Endothelial cell of umbilical vein (primary cell): ENCODE measurements at regions of chr17 and their contacts with region 1.

Region 1: DNA sequence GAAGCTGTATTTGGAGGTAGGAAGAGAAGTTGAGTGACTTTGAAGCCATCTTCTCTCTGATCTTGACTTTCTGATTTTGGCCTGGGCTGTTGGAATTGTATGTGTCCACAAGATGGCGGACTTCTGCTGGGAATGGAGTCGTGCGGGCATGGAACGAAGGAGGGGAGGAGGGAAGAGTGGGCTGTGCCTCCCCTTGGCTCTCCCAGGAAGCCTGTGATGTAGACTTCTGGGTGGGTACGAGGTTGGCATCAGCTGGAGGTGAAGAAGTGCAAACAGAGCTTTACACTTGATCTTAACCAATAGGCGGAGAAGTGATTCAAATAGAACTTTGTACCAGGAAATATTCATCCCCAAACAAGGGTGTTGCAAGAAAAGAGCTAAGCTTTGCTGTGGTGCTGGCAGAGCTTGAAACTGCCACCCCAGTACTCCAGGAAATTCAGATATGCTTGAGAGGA is 7.4 kb upstream of the TMEM220 start:
- DNase-seq: peak; percentile 45
- H3K4me3 ChIP-seq: no peak overlapping the region
- H3K27ac ChIP-seq: no peak overlapping the region
- H3K4me1 ChIP-seq: no peaks in the 10 kb centered on the region
- H3K27me3 ChIP-seq: peaks cover 0 to 3% of the 10 kb centered on the region in 2 experiments
- CTCF ChIP-seq: peak; percentile 69 to 77
- POLR2A ChIP-seq: no peak

Region 2: DNA sequence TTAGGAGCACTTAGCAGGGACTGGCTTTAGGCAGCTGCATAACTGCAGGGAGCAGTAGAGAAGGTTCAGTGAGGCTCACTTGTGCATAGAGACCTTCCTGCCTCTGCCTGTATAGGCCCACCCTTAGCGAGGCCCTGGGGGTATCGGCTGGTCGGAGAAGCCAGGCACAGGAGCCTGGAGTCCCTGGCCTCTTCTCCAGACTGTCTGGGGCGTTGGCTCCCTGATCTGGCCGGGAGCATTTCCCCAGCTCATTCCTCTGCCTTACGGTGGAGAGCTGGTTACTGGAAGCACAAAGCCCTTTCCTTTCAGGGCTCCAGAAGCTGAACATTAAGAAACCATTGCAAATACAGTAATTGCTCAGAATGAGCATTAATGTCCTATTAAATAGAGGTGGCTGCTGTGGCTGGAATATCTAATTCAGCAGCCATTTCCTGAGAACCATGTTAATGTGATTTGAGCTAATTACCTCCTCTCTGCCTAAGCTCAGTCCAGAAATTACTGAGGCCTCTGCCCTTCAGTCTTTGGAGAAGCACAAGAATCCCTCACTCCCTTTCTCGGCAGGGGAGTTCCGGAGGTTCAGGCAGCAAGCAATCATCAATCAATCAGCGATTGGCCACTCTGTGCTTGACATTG is 11.5 kb after region 1 on chr17:
- CTCF ChIA-PET with region 1: interaction called, 19 read pairs
- POLR2A ChIA-PET with region 1: no interaction called
- dilution Hi-C with region 1: no loop called
- intact Hi-C with region 1: no loop called
- DNase-seq: no peak
- H3K4me3 ChIP-seq: no peak overlapping the region
- H3K27ac ChIP-seq: no peak overlapping the region
- H3K4me1 ChIP-seq: no peaks in the 10 kb centered on the region
- H3K27me3 ChIP-seq: no peaks in the 10 kb centered on the region
- CTCF ChIP-seq: no peak
- POLR2A ChIP-seq: no peak

Region 3: GRCh38 chr17:10844621-10845387 is 107.6 kb after region 1 on chr17:
- CTCF ChIA-PET with region 1: interaction called, 36 read pairs
- POLR2A ChIA-PET with region 1: no interaction called
- dilution Hi-C with region 1: no loop called
- intact Hi-C with region 1: loop called (anchors 1 kb)
- DNase-seq: peak; percentile 56
- H3K4me3 ChIP-seq: peak overlapping the region in 1 of 3 experiments; percentile 33
- H3K27ac ChIP-seq: no peak overlapping the region
- H3K4me1 ChIP-seq: no peaks in the 10 kb centered on the region
- H3K27me3 ChIP-seq: peaks cover 0 to 4% of the 10 kb centered on the region in 2 experiments
- CTCF ChIP-seq: peak; percentile 73 to 88
- POLR2A ChIP-seq: no peak

Region 4: DNA sequence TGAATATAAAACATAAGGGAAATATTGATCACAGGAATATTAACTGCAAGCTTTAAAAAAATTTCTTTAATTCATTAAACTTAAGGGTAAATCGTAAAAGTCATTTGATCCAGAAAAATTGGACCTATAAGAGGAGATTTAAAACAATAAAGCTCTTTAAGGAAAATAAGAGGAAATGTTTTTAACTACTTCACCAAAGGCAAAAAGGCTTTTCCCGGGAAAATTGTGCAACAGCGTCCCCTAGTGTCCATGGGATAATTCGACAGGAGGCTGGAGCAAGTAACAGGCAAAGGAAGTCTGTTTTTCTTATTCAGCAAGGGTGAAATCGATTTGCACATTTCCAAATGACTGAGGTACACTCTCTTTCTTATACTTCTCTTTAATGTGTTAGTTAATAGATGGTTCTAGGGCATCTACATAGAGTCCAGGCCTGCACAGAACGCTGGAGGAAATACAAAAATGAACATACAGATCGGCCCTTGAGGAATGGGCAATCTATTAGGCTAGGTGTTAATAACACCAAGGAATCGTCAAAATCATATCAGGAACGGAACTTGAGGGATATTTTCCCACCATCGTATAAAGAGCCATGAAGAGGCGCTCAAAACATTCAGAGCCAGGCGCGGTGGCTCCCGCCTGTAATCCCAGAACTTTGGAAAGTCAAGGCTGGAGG is 1198.7 kb after region 1 on chr17:
- CTCF ChIA-PET with region 1: interaction called, 13 read pairs
- POLR2A ChIA-PET with region 1: no interaction called
- dilution Hi-C with region 1: no loop called
- intact Hi-C with region 1: no loop called
- DNase-seq: peak; percentile 14
- H3K4me3 ChIP-seq: no peak overlapping the region
- H3K27ac ChIP-seq: no peak overlapping the region
- H3K4me1 ChIP-seq: no peaks in the 10 kb centered on the region
- H3K27me3 ChIP-seq: no peaks in the 10 kb centered on the region
- CTCF ChIP-seq: peak; percentile 58 to 71
- POLR2A ChIP-seq: no peak